ENCODE measurements at regions of chr10 and their contacts with region 1.

Region 1: DNA sequence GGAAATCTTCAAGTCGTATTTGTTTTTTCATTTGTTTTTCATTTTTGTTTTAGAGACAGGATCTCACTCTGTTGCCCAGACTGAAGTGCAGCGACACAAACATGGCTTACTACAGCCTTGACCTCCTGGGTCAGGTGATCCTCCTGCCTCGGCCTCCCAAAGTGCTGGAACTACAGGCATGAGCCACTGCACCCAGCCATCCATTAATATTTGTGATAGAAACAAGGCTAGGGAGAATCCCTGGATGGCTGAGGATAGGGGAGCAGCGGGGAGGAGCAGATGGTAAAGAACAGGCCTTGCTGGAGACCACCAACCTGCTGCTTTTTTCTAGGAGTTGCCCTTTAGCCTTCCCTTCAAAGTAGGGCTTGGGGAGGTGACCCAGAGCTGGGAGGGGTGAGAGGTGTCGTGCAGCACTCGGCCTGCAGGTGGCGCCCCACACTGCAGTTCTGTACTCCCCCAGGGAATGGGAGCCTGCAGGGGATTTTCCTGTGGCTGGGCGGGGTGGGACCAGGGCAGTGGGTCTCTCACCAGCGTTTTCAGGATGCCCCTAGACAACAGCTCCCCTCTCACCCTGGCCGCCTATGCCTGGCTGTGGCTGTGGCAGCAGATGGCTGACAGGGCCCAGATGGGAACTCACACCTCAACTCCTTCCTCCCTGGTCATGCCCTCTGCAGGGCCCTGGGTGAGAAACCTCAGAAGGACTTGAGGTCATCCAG is 12.6 kb upstream of the CDH23 start:
- DNase-seq: peak; percentile 85
- ATAC-seq: peak; percentile 95

Region 2: DNA sequence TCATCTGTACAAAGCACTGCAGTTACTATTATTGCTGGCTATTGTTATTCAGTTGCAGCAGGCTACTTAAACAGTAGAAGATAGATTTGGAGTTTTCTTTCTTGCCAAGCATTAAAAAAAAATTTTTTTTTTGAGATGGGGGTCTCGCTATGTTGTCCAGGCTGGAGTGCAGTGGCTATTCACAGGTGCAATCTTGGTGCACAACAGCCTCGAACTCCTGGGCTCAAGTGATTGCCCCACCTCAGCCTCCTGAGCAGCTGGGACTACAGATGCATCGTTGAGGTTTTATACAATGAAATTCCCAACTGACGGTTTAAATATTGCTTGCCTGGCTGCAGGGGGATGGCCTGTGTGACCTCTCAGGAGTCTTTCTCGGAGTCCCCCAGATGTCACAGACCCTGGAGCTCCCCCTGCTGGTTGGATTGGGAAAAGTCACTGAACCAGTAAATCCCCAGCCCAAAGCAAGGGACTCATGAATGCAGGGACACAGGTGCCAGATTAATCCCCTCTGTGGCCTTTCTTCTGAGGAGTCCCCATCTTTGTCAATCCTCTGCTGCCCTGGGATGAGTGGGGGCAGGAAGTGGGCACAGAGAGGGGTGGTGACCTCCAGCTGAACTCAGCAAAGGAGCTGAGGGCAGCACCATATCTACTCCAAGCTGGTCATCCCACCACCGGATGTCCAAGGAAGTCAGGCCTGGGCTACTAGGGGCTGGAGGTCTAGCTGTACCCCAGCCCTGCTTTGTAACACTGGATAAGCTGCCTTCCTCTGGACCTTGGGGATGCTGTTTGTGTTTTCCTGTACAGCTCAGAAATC is 185.9 kb after region 1 on chr10:
- intact Hi-C with region 1: loop called (anchors 5 kb)
- DNase-seq: peak; percentile 79
- ATAC-seq: peak; percentile 77

Region 3: GRCh38 chr10:71805776-71806703 is 421.9 kb after region 1 on chr10:
- intact Hi-C with region 1: loop called (anchors 10 kb)
- DNase-seq: peak; percentile 63
- ATAC-seq: peak; percentile 66

Measured in Right ventricle myocardium superior (tissue), 1 donor.